Esophagus muscularis mucosa (tissue), 4 donors: ENCODE measurements at regions of chr6 and their contacts with region 1.

Region 1: GRCh38 chr6:149082286-149082707 is 235.2 kb upstream of the TAB2 start:
- DNase-seq: no peak
- H3K4me3 ChIP-seq: no peak overlapping the region
- H3K27ac ChIP-seq: no peak overlapping the region
- H3K4me1 ChIP-seq: peaks cover 18 to 35% (median 28%) of the 10 kb centered on the region in 4 donors
- H3K27me3 ChIP-seq: no peaks in the 10 kb centered on the region
- CTCF ChIP-seq: peak; percentile 73 to 79 (median 76)
- EP300 ChIP-seq: no peak
- POLR2A ChIP-seq: no peak

Region 2: GRCh38 chr6:148746363-148747144 is 335.7 kb before region 1 on chr6 and contains the start of gene UST:
- intact Hi-C with region 1: no loop called
- DNase-seq: peak; percentile 96
- H3K4me3 ChIP-seq: peak within 1 kb of the TSS; percentile 70 to 95 (median 84)
- H3K27ac ChIP-seq: peak within 1 kb of the TSS; percentile 83 to 92 (median 90)
- H3K4me1 ChIP-seq: peaks cover 6 to 42% (median 33%) of the 10 kb centered on the region in 4 donors
- H3K27me3 ChIP-seq: no peaks in the 10 kb centered on the region
- CTCF ChIP-seq: peak; percentile 20 to 42 (median 29)
- EP300 ChIP-seq: no peak
- POLR2A ChIP-seq: no peak
- total RNA-seq, gene UST: 29.1 to 46.3 (median 32.4) TPM

Region 3: DNA sequence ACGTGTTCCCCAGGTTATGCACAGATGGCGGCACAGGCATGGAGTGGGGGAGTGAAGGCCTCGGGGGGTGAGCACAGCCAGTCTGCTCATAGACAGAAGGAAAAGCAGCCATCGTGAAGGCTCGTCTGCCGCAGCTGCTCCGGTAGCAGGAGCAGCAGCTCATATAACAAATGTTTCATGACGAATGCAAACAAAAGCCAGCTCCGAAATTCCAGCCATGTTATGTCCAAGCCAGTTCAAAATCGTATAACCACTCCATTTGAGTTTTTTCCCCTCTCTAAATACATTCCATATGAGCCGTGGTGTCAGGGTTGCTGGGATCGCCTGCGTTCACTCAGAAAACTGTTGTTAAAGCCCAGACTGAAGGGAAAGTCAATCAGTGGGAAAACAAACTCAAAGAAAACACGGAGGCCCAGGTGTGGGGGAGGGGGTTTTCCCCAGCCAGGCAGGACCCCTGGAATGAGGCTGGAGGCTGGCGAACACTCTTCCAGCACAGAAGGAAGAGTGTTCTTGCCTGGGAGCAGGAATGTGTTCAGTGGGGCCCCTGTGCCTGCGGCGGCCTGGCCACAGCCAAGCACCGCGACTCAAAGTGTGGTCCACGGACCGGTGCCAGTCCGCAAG is 45.1 kb before region 1 on chr6:
- intact Hi-C with region 1: loop called (anchors 5 kb)
- DNase-seq: peak; percentile 82
- H3K4me3 ChIP-seq: no peak overlapping the region
- H3K27ac ChIP-seq: peak overlapping the region in 1 of 4 donors; percentile 5
- H3K4me1 ChIP-seq: peaks cover 0 to 22% (median 21%) of the 10 kb centered on the region in 4 donors
- H3K27me3 ChIP-seq: no peaks in the 10 kb centered on the region
- CTCF ChIP-seq: no peak
- EP300 ChIP-seq: no peak
- POLR2A ChIP-seq: no peak

Region 4: DNA sequence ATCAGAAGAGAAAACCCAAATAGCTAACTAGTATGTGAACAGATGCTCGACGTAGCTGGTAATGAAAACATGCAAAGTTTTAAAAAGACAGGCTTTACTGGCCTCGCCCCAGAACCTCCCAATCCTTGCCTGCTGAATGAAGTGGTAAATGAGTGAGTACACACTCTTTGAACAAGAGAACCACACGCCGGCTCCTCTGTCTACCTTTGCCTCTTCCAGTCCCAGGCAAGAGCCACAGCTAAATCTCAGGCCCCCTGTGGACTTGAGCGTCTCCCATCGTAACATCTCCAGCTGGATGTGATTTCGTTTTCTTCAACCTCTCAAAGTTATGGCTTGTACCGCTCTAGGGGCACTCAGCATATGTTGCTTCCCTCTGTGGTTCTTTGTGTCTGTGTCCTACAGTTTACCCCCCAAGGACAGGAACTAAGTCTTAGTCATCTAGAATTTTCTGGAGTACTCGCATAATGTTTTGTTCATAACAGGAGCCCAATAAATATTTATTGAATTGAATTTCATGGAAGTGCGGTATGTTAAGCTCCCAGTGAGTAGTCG is 82.0 kb after region 1 on chr6:
- intact Hi-C with region 1: no loop called
- DNase-seq: no peak
- H3K4me3 ChIP-seq: no peak overlapping the region
- H3K27ac ChIP-seq: no peak overlapping the region
- H3K4me1 ChIP-seq: peaks cover 0 to 17% (median 14%) of the 10 kb centered on the region in 4 donors
- H3K27me3 ChIP-seq: no peaks in the 10 kb centered on the region
- CTCF ChIP-seq: no peak
- EP300 ChIP-seq: no peak
- POLR2A ChIP-seq: no peak

Region 5: GRCh38 chr6:149316798-149317655 is 234.7 kb after region 1 on chr6:
- intact Hi-C with region 1: loop called (anchors 10 kb)
- DNase-seq: peak; percentile 96
- H3K4me3 ChIP-seq: peak overlapping the region; percentile 94 to 96 (median 95)
- H3K27ac ChIP-seq: peak overlapping the region; percentile 97 to 99 (median 98)
- H3K4me1 ChIP-seq: peaks cover 20 to 38% (median 32%) of the 10 kb centered on the region in 4 donors
- H3K27me3 ChIP-seq: no peaks in the 10 kb centered on the region
- CTCF ChIP-seq: peak in 2 of 3 experiments; percentile 5 to 12
- EP300 ChIP-seq: no peak
- POLR2A ChIP-seq: no peak

Region 6: GRCh38 chr6:149431905-149432775 is 349.8 kb after region 1 on chr6:
- intact Hi-C with region 1: loop called (anchors 1 kb)
- DNase-seq: peak; percentile 97
- H3K4me3 ChIP-seq: peak overlapping the region in 1 of 4 donors; percentile 18
- H3K27ac ChIP-seq: no peak overlapping the region
- H3K4me1 ChIP-seq: peaks cover 3 to 18% (median 9%) of the 10 kb centered on the region in 4 donors
- H3K27me3 ChIP-seq: no peaks in the 10 kb centered on the region
- CTCF ChIP-seq: peak; percentile 94 to 95 (median 94)
- EP300 ChIP-seq: no peak
- POLR2A ChIP-seq: no peak

Region 7: DNA sequence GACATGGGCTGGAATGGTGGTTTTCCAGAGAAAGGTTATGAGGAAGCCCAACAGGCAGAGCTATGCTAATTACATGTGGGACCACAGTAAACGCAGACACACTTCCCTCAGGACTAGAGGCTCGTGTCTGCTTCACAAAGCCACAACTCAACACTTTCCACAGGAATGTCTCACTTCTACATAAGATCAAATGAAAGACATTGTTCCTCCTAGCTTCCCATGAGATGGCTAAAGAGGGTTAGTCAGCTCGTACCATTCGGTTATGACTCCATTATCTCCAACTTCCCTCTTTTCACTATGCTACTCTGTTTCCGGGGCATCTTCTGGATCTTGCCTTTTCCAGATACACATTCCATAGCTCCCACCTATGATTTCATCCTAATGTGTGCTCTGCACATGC is 431.6 kb after region 1 on chr6:
- intact Hi-C with region 1: loop called (anchors 2 kb)
- DNase-seq: no peak
- H3K4me3 ChIP-seq: no peak overlapping the region
- H3K27ac ChIP-seq: no peak overlapping the region
- H3K4me1 ChIP-seq: peaks cover 0 to 15% (median 14%) of the 10 kb centered on the region in 4 donors
- H3K27me3 ChIP-seq: no peaks in the 10 kb centered on the region
- CTCF ChIP-seq: no peak
- EP300 ChIP-seq: no peak
- POLR2A ChIP-seq: no peak